ENCODE measurements at regions of chr4 and their contacts with region 1.

Region 1: DNA sequence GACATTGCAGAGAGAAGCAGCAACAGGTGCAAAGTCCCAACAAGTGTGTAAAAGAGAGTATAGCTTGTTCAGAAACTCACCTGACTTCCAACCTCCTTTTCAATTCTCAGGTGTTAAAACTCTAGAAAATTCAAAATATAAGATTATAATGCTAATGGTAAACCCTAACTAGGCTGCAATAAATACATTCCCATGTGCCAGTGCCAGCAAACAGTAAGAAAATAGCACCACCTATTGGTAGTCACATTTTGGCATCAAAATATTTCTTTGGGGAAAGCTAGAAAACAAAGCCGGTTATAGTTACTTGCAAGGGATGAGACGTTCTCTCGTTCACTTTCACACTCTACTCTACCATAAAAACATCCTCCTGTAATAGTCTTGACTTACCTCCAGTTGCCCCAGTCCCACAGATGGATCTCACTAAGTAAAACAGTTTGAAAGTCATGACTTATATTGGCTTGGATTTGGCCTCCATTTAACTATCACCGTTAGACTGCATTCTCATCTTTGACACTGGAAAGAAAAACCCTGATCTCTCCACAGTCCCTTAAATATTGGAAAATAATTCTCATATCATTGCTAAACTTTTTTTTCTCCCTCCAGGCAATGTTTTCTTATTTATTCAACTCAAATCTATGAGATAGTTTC is 9.6 kb downstream of the BMP3 start:
- DNase-seq: peak in 1 of 2 experiments; percentile 35
- H3K4me3 ChIP-seq: no peak overlapping the region
- H3K4me1 ChIP-seq: no peaks in the 10 kb centered on the region
- H3K27me3 ChIP-seq: peaks cover 6% of the 10 kb centered on the region; the same call in 1 of the 2 replicates

Region 2: DNA sequence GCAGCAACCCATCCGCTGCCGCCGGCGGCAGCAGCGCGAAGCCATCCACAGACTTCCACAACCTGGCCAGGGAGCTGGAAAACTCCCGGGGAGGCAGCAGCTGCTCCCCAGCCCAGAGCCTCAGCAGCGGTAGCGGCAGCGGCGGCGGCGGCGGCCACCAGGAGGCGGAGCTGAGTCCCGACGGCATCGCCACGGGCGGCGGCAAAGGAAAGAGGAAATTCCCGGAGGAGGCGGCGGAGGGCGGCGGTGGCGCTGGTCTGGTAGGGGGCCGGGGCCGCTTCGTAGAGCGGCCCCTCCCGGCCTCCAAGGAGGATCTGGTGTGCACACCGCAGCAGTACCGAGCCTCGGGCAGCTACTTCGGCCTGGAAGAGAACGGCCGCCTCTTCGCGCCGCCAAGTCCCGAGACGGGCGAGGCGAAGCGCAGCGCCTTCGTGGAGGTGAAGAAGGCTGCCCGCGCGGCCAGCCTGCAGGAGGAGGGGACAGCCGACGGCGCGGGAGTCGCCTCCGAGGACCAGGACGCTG is 837.9 kb before region 1 on chr4:
- in situ Hi-C with region 1: loop called (anchors 25 kb)
- DNase-seq: peak; percentile 49 to 86
- H3K4me3 ChIP-seq: peak overlapping the region; percentile 40
- H3K4me1 ChIP-seq: no peaks in the 10 kb centered on the region
- H3K27me3 ChIP-seq: no peaks in the 10 kb centered on the region

Region 3: GRCh38 chr4:80365928-80366327 is 674.2 kb before region 1 on chr4:
- in situ Hi-C with region 1: loop called (anchors 5 kb)
- DNase-seq: peak; percentile 75 to 77
- H3K4me3 ChIP-seq: no peak overlapping the region
- H3K4me1 ChIP-seq: no peaks in the 10 kb centered on the region; the same call in 1 of the 2 replicates
- H3K27me3 ChIP-seq: no peaks in the 10 kb centered on the region

Region 4: DNA sequence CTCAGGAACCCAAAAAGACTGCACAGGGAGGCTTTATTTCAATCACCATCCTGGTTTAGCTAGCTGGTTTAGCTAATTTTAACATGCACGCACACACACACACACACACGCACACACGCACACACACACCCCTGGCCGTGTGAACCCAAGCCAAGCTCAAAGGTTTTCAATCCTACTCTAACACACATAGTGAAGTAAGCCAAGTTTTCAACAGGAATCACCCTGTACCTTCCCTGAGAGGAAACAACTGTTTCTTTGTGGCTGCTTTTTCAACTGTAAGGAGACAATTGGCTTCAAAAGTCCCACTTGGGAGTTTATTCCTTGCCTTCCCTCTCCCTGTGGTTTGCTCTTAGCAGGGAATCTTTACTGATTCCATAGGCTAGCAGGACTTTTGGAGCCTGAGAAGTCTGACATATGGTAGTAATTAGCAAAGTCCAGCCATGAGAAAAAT is 108.5 kb before region 1 on chr4:
- in situ Hi-C with region 1: no loop called
- DNase-seq: no peak
- H3K4me3 ChIP-seq: no peak overlapping the region
- H3K4me1 ChIP-seq: no peaks in the 10 kb centered on the region
- H3K27me3 ChIP-seq: no peaks in the 10 kb centered on the region

Region 5: DNA sequence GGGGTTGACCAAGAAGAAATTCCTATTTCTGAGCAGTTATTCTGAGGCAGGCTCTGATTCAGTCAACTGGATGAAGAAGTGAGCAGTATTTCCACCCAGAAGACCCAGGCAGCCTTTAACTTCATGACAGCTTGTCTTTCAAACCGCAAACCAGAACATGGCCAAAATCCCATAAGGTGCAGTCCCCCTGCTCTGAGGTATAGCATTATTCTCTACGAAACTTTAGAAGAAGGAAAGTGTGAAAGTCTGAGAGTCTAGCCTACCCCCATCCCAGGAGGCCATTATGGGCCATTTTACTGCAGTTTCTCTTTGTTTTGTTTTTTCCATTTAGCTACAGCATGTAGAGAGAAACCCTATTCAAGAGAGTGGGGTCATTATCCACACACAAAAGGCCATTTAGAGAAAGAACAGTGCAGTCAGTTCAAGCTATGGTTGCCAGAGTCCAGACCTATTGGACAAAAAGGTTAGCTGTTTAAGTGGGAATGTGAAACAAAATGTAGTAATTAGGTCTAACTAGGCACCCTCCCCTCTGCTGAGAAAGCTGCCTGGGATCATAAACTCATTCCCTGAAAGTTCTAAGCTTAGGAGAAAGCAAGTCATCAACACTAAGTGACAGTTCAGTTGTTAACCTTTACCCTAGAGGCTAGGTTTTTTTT is 483.7 kb after region 1 on chr4:
- in situ Hi-C with region 1: no loop called
- DNase-seq: peak in 1 of 2 experiments; percentile 4
- H3K4me3 ChIP-seq: no peak overlapping the region
- H3K4me1 ChIP-seq: no peaks in the 10 kb centered on the region
- H3K27me3 ChIP-seq: no peaks in the 10 kb centered on the region

Measured in HAP-1 (cell line).